Heart left ventricle (tissue), 16 donors: ENCODE measurements at regions of chr15 and their contacts with region 1.

Region 1: DNA sequence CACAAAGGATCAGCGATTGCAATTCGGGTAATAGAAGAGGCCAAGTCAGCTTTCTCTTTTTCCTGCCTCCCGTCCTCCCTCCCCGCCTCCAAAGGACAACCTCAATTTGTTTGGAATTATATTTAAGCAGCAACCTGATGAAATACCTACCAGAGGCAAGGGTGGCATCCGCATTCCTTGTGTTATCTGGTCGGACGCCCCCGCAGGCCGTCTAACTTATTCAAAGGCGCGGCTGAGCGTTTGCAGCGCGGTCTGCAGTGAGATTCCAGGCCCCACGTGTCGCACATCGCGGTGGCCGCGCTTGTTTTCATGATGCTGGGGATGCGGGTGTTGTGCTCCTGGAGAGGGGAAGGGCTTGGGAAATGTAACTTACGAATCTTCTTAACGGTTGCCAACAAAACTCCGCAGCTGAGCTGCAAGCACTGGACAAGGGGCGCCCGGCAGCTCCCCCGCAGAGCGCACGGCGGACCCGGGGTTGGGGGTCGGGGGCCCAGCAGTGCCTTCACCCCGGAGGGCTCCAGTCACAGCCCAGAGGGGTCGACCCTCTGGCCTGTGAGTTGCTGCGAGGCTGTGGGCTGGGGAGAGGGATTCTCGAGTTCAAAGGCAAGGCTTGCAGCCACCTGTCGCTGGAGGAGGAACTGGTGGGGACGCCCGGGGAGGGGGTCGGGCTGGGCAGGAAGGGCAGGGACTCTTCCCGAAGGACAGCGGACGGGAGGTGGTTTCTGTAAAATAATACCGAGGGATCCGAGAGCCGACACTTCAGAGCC is 20.5 kb upstream of the RGMA start:
- DNase-seq: no peak
- ATAC-seq: no peak
- H3K4me3 ChIP-seq: no peak overlapping the region
- H3K27ac ChIP-seq: no peak overlapping the region
- H3K4me1 ChIP-seq: no peaks in the 10 kb centered on the region
- H3K27me3 ChIP-seq: peaks cover 5 to 41% (median 16%) of the 10 kb centered on the region in 9 donors
- CTCF ChIP-seq: no peak
- POLR2A ChIP-seq: no peak

Region 2: DNA sequence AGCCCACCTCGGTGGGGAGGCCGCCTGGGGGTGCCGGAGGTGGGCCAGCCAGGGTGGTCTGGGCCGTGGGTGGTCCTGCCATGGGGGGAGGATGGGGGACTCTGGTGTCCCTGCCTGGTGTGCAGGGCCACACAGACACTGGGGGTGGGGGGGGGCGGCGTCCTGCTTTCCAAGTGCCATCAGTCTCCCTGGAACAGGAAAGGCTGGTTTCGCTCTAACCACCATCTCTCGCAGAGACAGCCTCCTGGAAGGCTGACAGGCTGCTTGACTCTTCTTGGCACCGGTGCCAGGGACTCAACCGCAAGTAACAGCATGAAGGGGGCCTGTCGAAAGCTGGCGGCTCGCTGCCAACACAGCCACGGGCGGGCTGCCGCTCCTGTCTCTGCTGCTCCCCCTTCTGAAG is 60.8 kb before region 1 on chr15:
- intact Hi-C with region 1: no loop called
- DNase-seq: no peak
- ATAC-seq: no peak
- H3K4me3 ChIP-seq: no peak overlapping the region
- H3K27ac ChIP-seq: peak overlapping the region in 1 of 12 donors; percentile 36
- H3K4me1 ChIP-seq: peaks cover 0 to 8% (median 0%) of the 10 kb centered on the region in 12 donors
- H3K27me3 ChIP-seq: no peaks in the 10 kb centered on the region
- CTCF ChIP-seq: no peak
- POLR2A ChIP-seq: no peak

Region 3: GRCh38 chr15:93302080-93302765 is 192.7 kb after region 1 on chr15:
- intact Hi-C with region 1: loop called in 1 of 10 experiments (anchors 10 kb)
- DNase-seq: no peak
- ATAC-seq: no peak
- H3K4me3 ChIP-seq: no peak overlapping the region
- H3K27ac ChIP-seq: no peak overlapping the region
- H3K4me1 ChIP-seq: peaks cover 0 to 3% (median 0%) of the 10 kb centered on the region in 12 donors
- H3K27me3 ChIP-seq: no peaks in the 10 kb centered on the region
- CTCF ChIP-seq: no peak
- POLR2A ChIP-seq: no peak

Region 4: DNA sequence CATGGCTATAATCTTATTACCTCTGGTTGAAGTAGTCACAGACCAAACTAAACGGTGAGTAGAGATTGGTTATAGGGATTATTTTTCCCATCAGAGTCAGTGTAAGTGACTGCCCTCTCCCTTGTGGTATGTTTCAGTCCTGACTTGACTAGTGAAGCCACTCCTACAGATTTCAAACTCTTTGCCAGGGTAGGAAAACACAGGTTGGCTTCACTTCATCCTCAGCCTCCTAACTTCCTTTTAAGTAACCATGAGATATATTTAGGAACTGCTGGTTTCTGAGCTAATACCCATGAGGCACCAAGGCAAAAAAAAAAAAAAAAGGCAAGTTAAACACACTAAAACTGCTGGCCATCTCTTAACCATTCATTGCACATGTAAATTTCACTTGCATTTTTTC is 772.6 kb after region 1 on chr15:
- intact Hi-C with region 1: no loop called
- DNase-seq: no peak
- ATAC-seq: peak in 3 of 4 donors; percentile 29 to 69 (median 39)
- H3K4me3 ChIP-seq: no peak overlapping the region
- H3K27ac ChIP-seq: peak overlapping the region in 5 of 12 donors; percentile 3 to 49 (median 32)
- H3K4me1 ChIP-seq: peaks cover 0 to 11% (median 0%) of the 10 kb centered on the region in 12 donors
- H3K27me3 ChIP-seq: peaks cover 0 to 3% (median 0%) of the 10 kb centered on the region in 9 donors
- CTCF ChIP-seq: no peak
- POLR2A ChIP-seq: no peak